Sigmoid colon (tissue), 7 donors: ENCODE measurements at regions of chr4 and their contacts with region 1.

Region 1: DNA sequence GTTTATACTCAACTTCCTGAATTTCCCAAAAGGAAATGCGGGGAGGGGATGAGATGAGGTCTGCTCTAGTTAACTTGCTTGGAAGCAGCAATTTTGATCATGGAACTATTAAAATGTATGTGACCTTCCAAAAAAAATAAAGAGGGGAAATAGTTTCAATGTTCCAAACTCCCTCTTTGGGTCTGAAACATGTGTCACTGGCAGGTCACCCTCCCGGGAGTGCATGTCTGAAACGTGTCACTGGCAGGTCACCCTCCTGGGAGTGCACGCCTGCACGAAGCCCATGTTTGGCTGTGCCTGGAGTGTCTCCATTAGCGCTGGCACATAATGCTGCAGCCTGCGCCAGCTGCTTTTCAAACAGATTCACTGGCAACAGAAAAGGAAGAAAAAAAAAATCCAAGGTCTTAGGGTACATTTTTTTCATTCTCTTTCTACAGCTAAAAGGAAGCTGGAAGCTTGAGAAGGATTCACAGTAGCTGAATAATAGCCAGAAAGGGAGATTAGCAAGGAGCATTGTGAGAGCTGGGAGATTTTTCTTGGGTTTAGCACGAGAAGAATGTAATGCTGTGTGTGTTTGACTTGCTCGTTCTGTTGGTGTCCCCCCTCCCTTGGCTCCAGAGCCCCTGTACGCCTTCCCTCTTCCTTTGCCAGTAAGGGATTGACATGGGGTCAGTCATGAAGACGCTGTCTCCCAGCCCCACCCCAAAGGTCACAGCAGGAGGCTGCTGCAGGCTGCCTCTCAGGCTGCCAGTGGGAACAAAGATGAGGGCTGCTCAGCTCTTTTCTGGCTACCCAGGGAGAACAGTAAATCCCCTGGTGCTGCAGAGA is 39.2 kb upstream of the TLR3 start:
- DNase-seq: peak; percentile 90
- H3K4me3 ChIP-seq: peak overlapping the region in 3 of 4 donors; percentile 14 to 21 (median 20)
- H3K27ac ChIP-seq: peak overlapping the region; percentile 85 to 90 (median 88)
- H3K4me1 ChIP-seq: peaks cover 0 to 70% (median 67%) of the 10 kb centered on the region in 4 donors
- H3K27me3 ChIP-seq: no peaks in the 10 kb centered on the region
- CTCF ChIP-seq: no peak
- EP300 ChIP-seq: peak in 3 of 4 donors; percentile 11 to 63 (median 38)
- POLR2A ChIP-seq: no peak

Region 2: DNA sequence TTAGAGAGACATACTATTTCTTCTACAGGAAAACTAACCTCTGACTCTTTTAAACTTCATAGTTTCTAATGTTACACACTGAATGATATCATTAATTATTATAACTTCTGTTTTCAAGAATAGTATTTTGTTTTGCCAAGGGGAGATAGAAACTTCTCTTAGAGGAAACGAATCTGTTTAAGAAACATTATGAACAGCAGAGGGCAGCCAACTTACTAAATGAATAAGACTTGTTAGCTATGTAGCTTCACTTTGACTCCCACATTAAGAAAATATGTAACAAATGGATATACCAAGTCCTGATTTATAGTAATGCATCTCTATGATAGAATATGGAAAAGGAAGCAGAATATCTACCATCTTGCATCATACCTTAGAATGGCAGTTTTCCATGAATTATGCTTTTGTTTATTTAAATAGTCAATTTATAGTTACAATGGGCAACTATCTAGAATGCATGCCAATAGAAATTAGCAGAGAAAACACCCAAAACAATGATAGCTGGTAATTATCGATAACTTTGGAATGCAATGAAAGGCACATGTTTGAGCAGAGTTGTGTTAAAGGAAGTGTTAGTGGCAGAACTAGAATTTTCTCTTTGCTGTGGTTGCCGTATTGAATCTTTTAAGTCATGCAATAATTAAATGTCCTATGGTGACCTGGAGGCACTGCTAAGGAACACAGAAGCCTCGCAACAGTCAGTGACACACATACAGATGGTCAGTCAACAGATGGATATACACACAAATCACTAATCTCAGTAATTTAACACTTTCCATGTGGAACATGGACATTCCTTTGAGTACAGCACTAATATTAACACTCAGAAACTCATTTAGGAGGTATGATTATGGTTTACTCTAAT is 388.7 kb before region 1 on chr4:
- intact Hi-C with region 1: loop called (anchors 2 kb)
- DNase-seq: no peak
- H3K4me3 ChIP-seq: no peak overlapping the region
- H3K27ac ChIP-seq: peak overlapping the region; percentile 4 to 78 (median 69)
- H3K4me1 ChIP-seq: peaks cover 0 to 59% (median 33%) of the 10 kb centered on the region in 4 donors
- H3K27me3 ChIP-seq: no peaks in the 10 kb centered on the region
- CTCF ChIP-seq: peak; percentile 27 to 50 (median 42)
- EP300 ChIP-seq: no peak
- POLR2A ChIP-seq: no peak

Region 3: DNA sequence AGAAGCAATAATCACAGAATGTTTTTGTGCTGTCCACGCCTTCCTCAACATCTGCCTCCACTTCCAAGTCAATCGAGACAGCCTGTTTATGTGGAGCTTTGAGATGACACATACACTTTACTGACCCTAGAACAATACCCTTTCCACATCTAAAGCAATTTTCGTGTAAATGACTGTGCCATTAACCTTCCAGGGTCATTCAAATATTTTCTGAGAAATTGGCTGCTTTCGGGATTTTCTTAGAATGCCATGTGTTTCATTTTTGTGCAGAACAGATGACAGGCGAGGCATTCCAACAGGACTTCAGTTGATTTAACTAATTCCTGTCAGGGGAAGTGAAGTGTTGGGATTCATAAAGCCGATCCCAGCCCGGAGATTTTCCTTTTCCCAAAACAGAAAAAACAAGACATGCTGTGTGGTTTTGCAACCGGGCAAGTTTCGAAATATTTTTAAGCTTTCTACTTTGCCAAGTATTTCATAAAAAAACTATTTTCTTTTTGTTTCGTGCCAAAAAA is 291.7 kb before region 1 on chr4:
- intact Hi-C with region 1: loop called (anchors 5 kb)
- DNase-seq: peak; percentile 76
- H3K4me3 ChIP-seq: peak overlapping the region; percentile 4 to 38 (median 15)
- H3K27ac ChIP-seq: peak overlapping the region; percentile 81 to 88 (median 84)
- H3K4me1 ChIP-seq: peaks cover 0 to 85% (median 65%) of the 10 kb centered on the region in 4 donors
- H3K27me3 ChIP-seq: no peaks in the 10 kb centered on the region
- CTCF ChIP-seq: no peak
- EP300 ChIP-seq: no peak
- POLR2A ChIP-seq: no peak

Region 4: DNA sequence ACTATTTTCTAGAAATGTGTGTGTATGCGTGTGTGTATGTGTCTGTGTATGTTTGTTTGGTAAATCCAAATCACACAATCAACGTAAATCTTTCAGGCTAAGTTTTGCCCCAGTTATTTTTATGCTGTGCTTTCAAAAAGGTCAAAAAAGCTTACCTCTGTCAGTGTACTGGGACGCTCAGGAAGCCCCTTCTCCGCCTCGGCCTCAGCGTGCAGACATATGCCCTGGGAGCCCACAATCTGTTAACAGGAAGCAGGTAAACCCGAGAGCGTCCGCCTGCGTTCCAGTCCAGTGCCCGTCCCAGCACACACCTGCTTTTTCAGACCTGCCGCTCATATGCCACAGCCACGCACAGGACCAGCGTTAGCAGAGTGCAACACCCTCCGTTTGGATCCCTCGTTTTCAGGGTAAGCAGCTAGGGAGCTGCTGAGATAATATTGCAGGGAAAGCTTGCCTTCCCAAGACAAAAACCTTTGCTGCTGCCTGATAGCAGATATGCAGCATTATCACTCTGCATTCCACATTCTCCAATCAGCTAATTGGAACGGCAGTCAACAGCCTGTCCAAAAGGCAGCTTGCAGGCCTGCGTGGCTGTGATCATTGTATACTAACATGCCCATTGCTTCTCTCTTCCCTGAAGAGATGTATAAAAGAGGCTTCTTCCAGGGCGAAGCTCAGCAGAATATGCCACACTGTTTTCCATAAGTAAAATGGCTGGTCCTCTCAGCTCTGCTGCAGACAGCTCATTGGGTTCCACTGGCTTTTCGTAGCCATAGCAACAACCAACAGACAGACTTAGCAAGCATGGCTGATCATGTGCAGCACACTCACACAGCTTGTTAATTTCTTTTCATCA is 218.0 kb before region 1 on chr4 and contains the start of gene SORBS2:
- intact Hi-C with region 1: loop called (anchors 5 kb)
- DNase-seq: peak; percentile 73
- H3K4me3 ChIP-seq: peak within 1 kb of the TSS; percentile 42 to 62 (median 56)
- H3K27ac ChIP-seq: peak within 1 kb of the TSS; percentile 30 to 87 (median 82)
- H3K4me1 ChIP-seq: peaks cover 0 to 19% (median 7%) of the 10 kb centered on the region in 4 donors
- H3K27me3 ChIP-seq: no peaks in the 10 kb centered on the region
- CTCF ChIP-seq: no peak
- EP300 ChIP-seq: no peak
- POLR2A ChIP-seq: no peak
- total RNA-seq, gene SORBS2: 849 to 1,032 (median 869) TPM

Region 5: GRCh38 chr4:185839194-185839712 is 190.5 kb before region 1 on chr4:
- intact Hi-C with region 1: loop called (anchors 5 kb)
- DNase-seq: peak; percentile 81
- H3K4me3 ChIP-seq: peak overlapping the region in 1 of 4 donors; percentile 9
- H3K27ac ChIP-seq: peak overlapping the region; percentile 72 to 94 (median 86)
- H3K4me1 ChIP-seq: peaks cover 0 to 53% (median 48%) of the 10 kb centered on the region in 4 donors
- H3K27me3 ChIP-seq: no peaks in the 10 kb centered on the region
- CTCF ChIP-seq: no peak
- EP300 ChIP-seq: peak in 1 of 4 donors; percentile 49
- POLR2A ChIP-seq: no peak